PC-3 (cell line): ENCODE measurements at regions of chr21 and their contacts with region 1.

Region 1: GRCh38 chr21:42513985-42514882 is 582 bp downstream of the SLC37A1 start:
- DNase-seq: peak; percentile 44
- ATAC-seq: peak; percentile 37
- H3K4me3 ChIP-seq: peak overlapping the region; percentile 83
- H3K27ac ChIP-seq: peak overlapping the region; percentile 92
- H3K4me1 ChIP-seq: peaks cover 44% of the 10 kb centered on the region
- H3K27me3 ChIP-seq: no peaks in the 10 kb centered on the region
- CTCF ChIP-seq: no peak

Region 2: DNA sequence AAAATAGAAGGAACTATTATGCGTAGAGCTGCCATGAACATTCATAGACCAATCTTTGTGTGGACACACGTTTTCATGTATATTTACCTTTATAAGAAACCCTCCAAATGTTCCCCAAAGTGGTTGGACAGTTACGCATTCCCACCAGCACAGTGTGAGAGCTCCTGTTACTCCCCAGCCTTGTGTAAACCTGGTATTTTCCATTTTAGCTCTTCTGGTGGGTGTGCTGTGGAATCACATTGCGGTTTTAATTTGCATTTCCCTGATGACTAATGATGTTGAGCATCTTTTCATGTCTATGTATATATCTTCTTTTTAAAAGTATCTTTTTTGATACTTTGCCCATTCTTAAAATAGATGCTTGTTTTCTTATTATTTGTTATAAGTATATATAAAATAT is 113.7 kb before region 1 on chr21:
- CTCF ChIA-PET with region 1: no interaction called
- POLR2A ChIA-PET with region 1: no interaction called
- intact Hi-C with region 1: loop called (anchors 5 kb)
- DNase-seq: peak; percentile 23
- ATAC-seq: peak; percentile 32
- H3K4me3 ChIP-seq: no peak overlapping the region
- H3K27ac ChIP-seq: no peak overlapping the region
- H3K4me1 ChIP-seq: peaks cover 19% of the 10 kb centered on the region
- H3K27me3 ChIP-seq: no peaks in the 10 kb centered on the region
- CTCF ChIP-seq: no peak

Region 3: DNA sequence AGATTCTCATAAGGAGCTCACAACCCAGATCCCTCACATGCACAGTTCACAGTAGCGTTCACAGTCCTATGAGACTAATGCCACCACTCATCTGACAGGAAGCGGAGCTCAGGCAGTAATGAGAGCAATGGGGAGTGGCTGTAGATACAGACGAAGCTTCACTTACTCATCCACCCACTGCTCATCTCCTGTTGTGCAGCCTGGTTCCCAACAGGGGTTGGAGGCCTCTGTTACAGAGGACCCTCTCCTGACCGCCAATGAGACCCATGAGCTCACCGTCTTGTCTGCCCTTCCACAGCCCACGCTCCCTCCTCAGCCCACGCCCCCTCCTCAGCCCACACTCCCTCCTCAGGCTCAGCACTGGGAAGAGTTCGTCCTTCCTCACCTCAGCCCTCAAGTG is 57.8 kb before region 1 on chr21:
- CTCF ChIA-PET with region 1: no interaction called
- POLR2A ChIA-PET with region 1: no interaction called
- intact Hi-C with region 1: no loop called
- DNase-seq: peak; percentile 46
- ATAC-seq: peak; percentile 73
- H3K4me3 ChIP-seq: no peak overlapping the region
- H3K27ac ChIP-seq: no peak overlapping the region
- H3K4me1 ChIP-seq: no peaks in the 10 kb centered on the region; the same call in 1 of the 2 replicates
- H3K27me3 ChIP-seq: no peaks in the 10 kb centered on the region
- CTCF ChIP-seq: no peak

Region 4: GRCh38 chr21:42467140-42467983 is 46.9 kb before region 1 on chr21:
- CTCF ChIA-PET with region 1: interaction called, 7 read pairs
- POLR2A ChIA-PET with region 1: no interaction called
- intact Hi-C with region 1: loop called (anchors 2 kb)
- DNase-seq: peak; percentile 50
- ATAC-seq: peak; percentile 34
- H3K4me3 ChIP-seq: no peak overlapping the region
- H3K27ac ChIP-seq: peak overlapping the region; percentile 83
- H3K4me1 ChIP-seq: peaks cover 21% of the 10 kb centered on the region
- H3K27me3 ChIP-seq: no peaks in the 10 kb centered on the region
- CTCF ChIP-seq: peak; percentile 62

Region 5: GRCh38 chr21:42561762-42562650 is 47.8 kb after region 1 on chr21:
- CTCF ChIA-PET with region 1: no interaction called
- POLR2A ChIA-PET with region 1: no interaction called
- intact Hi-C with region 1: no loop called
- DNase-seq: no peak
- ATAC-seq: peak; percentile 33; the same call in 1 of the 2 replicates
- H3K4me3 ChIP-seq: no peak overlapping the region
- H3K27ac ChIP-seq: no peak overlapping the region
- H3K4me1 ChIP-seq: no peaks in the 10 kb centered on the region
- H3K27me3 ChIP-seq: no peaks in the 10 kb centered on the region
- CTCF ChIP-seq: no peak